ENCODE measurements at regions of chr17 and their contacts with region 1.

Region 1: DNA sequence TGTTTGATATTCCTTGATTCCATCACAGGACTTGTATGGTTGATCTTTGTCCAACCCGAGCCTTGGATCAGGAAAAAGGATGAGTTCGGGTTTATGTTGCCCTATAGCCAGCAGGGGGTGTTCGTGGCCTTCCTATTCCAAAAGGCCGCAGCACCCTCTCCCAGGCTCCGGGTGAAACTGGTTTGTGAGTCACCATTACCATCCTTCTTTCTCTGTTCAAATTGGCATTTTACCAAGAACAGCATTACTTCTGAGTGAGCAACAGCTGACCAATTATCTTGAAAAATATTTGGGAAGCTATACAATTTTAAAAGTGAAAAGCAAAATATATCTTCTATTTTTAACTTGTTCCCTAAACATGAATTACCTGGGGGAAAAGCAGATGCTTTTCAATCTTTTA is 24.3 kb upstream of the KRT20 start:
- DNase-seq: peak; percentile 96
- H3K4me3 ChIP-seq: no peak overlapping the region
- H3K27ac ChIP-seq: peak overlapping the region; percentile 98
- H3K4me1 ChIP-seq: peaks cover 47% of the 10 kb centered on the region
- H3K27me3 ChIP-seq: no peaks in the 10 kb centered on the region
- CTCF ChIP-seq: peak; percentile 76 to 84

Region 2: DNA sequence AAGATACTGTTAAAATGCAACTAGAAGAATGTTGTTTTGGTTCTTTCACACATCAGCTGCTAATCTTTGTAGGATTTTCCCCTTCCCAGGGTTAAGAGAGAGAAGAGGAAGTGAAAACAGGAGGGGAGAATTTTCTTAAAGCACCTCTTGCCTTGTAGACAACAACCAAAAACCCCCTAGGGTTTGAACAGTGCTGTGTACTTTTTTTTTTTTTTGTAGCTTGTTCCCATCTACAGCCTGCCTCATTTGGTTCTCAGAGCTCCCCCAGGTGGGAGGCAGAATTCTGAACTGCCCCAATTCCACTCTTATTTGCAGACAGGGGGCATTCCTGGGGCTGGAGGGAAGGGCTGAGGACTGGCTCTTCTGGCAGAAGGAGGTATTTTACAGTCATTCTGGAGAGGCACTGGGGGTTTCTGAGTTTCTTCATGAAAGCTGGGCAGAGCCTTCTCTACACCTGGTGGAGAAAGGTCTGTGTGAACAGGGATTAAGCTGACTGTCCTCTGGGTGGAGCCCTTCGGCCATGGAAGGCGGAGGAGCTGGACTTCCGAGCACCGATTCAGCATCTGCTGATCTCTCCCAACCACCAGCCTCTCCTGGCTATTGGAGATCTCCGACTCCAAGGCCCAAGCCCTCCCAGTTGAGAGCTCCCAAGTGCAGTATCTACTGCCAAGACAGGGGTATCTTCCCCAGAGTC is 293.9 kb before region 1 on chr17:
- CTCF ChIA-PET with region 1: no interaction called
- dilution Hi-C with region 1: no loop called
- in situ Hi-C with region 1: no loop called
- intact Hi-C with region 1: loop called (anchors 5 kb)
- DNase-seq: peak; percentile 67
- H3K4me3 ChIP-seq: no peak overlapping the region
- H3K27ac ChIP-seq: no peak overlapping the region
- H3K4me1 ChIP-seq: no peaks in the 10 kb centered on the region
- H3K27me3 ChIP-seq: no peaks in the 10 kb centered on the region
- CTCF ChIP-seq: peak; percentile 59 to 68

Region 3: DNA sequence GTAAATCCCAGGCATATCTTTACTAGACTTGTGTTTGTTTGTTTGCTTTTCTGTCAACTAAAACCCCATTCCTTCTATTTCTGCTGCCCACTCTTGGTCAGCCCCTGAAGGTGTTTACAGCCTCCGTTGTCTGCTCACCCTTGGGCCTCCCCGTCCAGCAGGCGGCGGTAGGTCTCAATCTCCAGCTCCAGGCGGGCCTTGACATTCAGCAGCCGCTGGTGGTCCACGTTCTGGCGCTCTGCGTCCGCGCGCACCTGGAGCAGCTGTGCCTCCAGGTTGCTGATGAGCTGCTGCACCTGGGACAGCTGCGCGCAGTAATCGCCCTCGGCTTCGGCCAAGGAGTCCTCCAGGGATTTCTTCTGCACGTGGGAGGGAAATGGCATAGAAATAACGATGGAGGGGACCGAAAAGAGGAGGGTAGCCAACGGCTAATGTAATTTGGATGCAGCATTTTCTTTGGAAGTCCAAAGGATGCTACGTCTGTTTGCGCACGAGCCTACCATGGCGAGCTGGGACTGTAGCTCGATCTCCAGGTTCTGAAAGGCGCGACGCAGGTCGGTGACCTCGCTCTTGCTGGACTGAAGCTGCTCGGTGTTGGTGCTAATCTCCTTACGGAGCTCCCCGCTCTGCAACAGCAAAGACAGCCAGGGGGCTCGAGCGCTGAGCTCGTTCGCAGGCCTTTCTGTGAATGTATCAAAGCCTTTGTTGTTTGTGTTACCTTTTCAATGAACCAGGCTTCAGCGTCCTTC is 46.2 kb before region 1 on chr17:
- CTCF ChIA-PET with region 1: no interaction called
- dilution Hi-C with region 1: loop called (anchors 5 kb)
- in situ Hi-C with region 1: loop called in 1 of 2 experiments (anchors 5 kb)
- intact Hi-C with region 1: no loop called
- DNase-seq: no peak
- H3K4me3 ChIP-seq: no peak overlapping the region
- H3K27ac ChIP-seq: no peak overlapping the region
- H3K4me1 ChIP-seq: no peaks in the 10 kb centered on the region
- H3K27me3 ChIP-seq: no peaks in the 10 kb centered on the region
- CTCF ChIP-seq: no peak

Region 4: GRCh38 chr17:40884708-40885512 is 24.4 kb before region 1 on chr17 and contains the start of gene KRT20:
- CTCF ChIA-PET with region 1: no interaction called
- dilution Hi-C with region 1: no loop called
- in situ Hi-C with region 1: no loop called
- intact Hi-C with region 1: no loop called
- DNase-seq: no peak
- H3K4me3 ChIP-seq: no peak within 1 kb of the TSS
- H3K27ac ChIP-seq: no peak within 1 kb of the TSS
- H3K4me1 ChIP-seq: no peaks in the 10 kb centered on the region
- H3K27me3 ChIP-seq: peaks cover 3% of the 10 kb centered on the region
- CTCF ChIP-seq: peak; percentile 14 to 16
- total RNA-seq, gene KRT20: not detected

Region 5: DNA sequence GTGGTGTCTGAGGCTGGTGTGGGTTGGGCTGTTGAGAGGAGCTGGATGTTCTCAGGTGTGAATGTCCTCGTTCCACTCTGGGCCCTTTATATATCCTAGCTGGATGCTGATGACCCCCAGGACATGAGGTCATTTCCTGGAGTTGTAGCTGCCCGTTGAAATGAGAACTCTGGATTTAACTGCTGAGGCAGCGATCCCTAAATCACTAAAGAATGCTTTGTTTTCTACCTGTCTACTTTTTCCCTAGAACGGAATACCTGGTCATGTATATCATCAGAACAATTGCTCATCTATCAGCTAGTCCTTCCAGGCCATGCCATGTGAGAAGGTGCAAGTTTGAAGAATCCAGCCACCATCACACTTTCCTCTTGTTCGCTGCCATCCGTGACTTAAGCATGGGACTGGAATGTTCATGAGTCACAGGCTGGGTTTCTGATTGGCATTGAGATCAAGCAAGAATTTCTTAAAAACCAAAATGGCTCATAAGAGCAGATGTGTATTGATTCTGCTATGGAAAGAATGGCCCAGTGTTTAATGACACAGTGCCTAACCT is 150.8 kb after region 1 on chr17 and contains the start of gene KRTAP2-3:
- CTCF ChIA-PET with region 1: no interaction called
- dilution Hi-C with region 1: no loop called
- in situ Hi-C with region 1: no loop called
- intact Hi-C with region 1: loop called (anchors 1 kb)
- DNase-seq: peak; percentile 97
- H3K4me3 ChIP-seq: no peak within 1 kb of the TSS
- H3K27ac ChIP-seq: peak within 1 kb of the TSS; percentile 60
- H3K4me1 ChIP-seq: peaks cover 33% of the 10 kb centered on the region
- H3K27me3 ChIP-seq: no peaks in the 10 kb centered on the region
- CTCF ChIP-seq: no peak
- total RNA-seq, gene KRTAP2-3: 4.8 to 27.5 TPM

Region 6: GRCh38 chr17:41322094-41322902 is 412.9 kb after region 1 on chr17:
- CTCF ChIA-PET with region 1: interaction called, 5 read pairs
- dilution Hi-C with region 1: no loop called
- in situ Hi-C with region 1: loop called in 1 of 2 experiments (anchors 5 kb)
- intact Hi-C with region 1: loop called (anchors 1 kb)
- DNase-seq: peak; percentile 61
- H3K4me3 ChIP-seq: no peak overlapping the region
- H3K27ac ChIP-seq: peak overlapping the region; percentile 39
- H3K4me1 ChIP-seq: peaks cover 3% of the 10 kb centered on the region
- H3K27me3 ChIP-seq: no peaks in the 10 kb centered on the region
- CTCF ChIP-seq: peak; percentile 95 to 98

Region 7: DNA sequence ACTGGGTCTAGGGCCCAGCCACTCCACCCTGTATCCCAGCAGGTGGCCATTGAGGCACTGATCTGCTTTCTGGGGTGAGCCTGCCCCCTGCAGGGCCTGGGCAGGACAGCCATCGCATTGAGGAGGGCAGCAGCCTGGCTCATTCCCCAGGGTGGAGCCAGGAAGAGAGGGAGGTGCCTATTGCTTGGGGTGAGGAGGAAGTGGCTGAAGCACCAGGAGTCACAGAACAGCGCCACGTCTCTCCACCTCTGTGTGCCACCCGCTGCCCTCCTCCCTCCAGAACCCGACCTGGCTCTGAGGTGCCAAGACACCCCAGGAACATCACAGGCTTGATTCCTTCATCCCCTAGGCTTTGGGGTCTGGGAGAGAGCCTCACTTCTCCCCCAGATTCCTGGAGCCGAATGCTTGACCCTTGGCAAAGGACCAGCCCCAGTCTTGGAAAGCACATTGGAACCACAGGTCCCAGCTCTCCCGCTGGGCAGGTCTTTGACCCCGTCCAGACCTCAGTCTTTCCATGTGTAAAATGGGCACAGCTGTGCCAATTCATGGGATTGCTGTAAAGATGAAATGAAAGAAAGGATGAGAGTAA is 587.6 kb after region 1 on chr17:
- CTCF ChIA-PET with region 1: no interaction called
- dilution Hi-C with region 1: no loop called
- in situ Hi-C with region 1: loop called in 1 of 2 experiments (anchors 5 kb)
- intact Hi-C with region 1: loop called (anchors 1 kb)
- DNase-seq: peak; percentile 88
- H3K4me3 ChIP-seq: no peak overlapping the region
- H3K27ac ChIP-seq: peak overlapping the region; percentile 52
- H3K4me1 ChIP-seq: peaks cover 49% of the 10 kb centered on the region
- H3K27me3 ChIP-seq: no peaks in the 10 kb centered on the region
- CTCF ChIP-seq: peak; percentile 97

Region 8: DNA sequence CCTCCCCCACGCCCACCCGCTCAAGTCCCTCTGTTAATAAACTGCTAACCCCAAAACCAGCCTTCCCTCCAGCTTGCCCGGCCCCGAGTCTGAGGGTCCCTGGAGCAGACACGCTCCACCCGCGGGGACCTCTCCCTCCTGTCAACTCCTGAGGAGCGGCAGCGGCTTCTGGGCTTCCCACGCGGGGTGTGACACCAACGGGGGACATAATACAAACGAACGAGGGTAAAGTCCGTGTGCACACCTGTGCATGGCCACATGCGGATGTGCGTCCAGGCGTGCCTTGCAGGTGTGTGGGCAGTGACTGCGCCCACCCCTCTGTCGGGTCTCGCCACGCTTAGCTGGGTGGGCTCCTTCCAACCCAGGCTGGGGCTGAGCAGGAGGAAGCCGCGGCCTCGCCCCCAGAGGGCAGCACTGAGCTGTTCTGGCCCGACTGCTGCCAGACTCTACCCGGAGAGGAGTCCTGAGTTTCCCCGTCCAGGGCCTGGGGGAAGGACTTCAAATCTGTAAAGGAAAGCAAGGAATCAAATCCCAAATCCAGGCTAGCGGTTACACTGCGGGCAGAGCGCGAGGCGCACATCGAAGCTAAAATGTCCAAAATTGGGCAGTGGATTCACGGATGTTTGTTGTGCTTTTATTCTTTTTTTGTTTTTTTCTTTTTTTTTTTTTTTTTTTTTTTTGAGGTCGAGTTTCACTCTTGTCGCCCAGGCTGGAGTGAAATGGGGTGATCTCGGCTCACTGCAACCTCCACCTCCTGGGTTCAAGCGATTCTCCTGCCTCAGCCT is 739.3 kb after region 1 on chr17:
- CTCF ChIA-PET with region 1: no interaction called
- dilution Hi-C with region 1: no loop called
- in situ Hi-C with region 1: no loop called
- intact Hi-C with region 1: loop called (anchors 1 kb)
- DNase-seq: peak; percentile 76
- H3K4me3 ChIP-seq: no peak overlapping the region
- H3K27ac ChIP-seq: peak overlapping the region; percentile 77
- H3K4me1 ChIP-seq: peaks cover 70% of the 10 kb centered on the region
- H3K27me3 ChIP-seq: no peaks in the 10 kb centered on the region
- CTCF ChIP-seq: peak; percentile 83 to 97